SK-N-SH (cell line): ENCODE measurements at regions of chr10 and their contacts with region 1.

Region 1: DNA sequence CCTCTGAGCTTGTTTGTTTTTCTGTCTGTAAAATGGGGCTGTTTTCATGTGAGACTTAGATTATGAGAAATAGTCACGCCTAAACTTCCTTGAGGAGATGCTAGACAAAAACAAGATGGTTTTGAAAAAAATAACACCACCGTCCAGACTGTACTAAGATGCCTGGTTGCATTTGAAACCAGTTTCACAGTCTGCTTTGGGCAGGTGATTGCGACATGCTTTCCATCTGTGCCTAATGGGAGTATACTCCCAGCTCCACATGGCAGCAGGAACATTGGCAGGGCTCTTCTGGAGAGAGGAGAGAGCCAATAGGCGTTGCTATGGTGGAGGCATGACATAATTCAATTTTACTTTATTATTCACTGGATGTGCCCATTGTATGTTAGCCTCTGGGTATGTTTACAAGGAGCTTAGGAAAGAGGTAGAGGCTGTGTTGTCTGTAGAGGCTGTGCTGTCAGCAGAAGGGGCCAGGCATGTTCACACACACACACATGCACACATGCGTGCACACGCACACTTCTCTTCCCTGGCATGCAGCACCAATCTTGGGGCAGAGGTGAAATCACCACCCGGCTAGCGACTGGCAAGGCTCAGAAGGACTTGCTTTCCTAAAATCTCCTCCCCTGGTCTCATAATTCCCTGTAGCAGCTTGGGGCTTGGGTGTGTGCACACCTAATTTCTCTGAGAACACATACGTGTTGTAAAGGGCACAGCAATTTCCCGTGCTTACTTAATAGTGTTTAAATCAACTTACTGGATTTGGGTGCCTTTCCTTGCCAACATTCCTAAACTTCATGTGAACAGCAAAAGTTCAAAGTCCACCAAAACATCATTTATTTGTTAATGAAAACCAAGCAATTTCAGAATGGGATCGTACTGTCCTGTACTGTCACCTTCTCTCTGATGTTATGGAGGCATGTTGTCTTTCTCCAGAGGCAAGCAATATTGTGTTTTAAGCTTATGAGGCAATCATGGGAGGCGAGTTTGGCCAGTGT is 162.1 kb downstream of the TCF7L2 start:
- DNase-seq: no peak
- H3K4me3 ChIP-seq: no peak overlapping the region
- H3K27ac ChIP-seq: no peak overlapping the region
- H3K4me1 ChIP-seq: peaks cover 0 to 7% of the 10 kb centered on the region in 2 experiments; a peak in 1 of 4 replicates
- H3K27me3 ChIP-seq: no peaks in the 10 kb centered on the region
- CTCF ChIP-seq: no peak
- EP300 ChIP-seq: no peak
- RAD21 ChIP-seq: no peak

Region 2: GRCh38 chr10:112811740-112812551 is 300.2 kb before region 1 on chr10:
- CTCF ChIA-PET with region 1: no interaction called
- POLR2A ChIA-PET with region 1: no interaction called
- DNase-seq: no peak
- H3K4me3 ChIP-seq: peak overlapping the region in 1 of 2 experiments; percentile 45; a peak in 1 of 4 replicates
- H3K27ac ChIP-seq: peak overlapping the region; percentile 66 to 70; a peak in 3 of 4 replicates
- H3K4me1 ChIP-seq: peaks cover 2 to 18% of the 10 kb centered on the region in 2 experiments; a peak in 3 of 4 replicates
- H3K27me3 ChIP-seq: no peaks in the 10 kb centered on the region
- CTCF ChIP-seq: no peak
- EP300 ChIP-seq: peak in 1 of 2 experiments; percentile 70; a peak in 1 of 4 replicates
- RAD21 ChIP-seq: no peak

Region 3: GRCh38 chr10:112898540-112899395 is 213.4 kb before region 1 on chr10:
- CTCF ChIA-PET with region 1: no interaction called
- POLR2A ChIA-PET with region 1: no interaction called
- DNase-seq: no peak
- H3K4me3 ChIP-seq: no peak overlapping the region
- H3K27ac ChIP-seq: no peak overlapping the region
- H3K4me1 ChIP-seq: no peaks in the 10 kb centered on the region
- H3K27me3 ChIP-seq: no peaks in the 10 kb centered on the region
- CTCF ChIP-seq: no peak
- EP300 ChIP-seq: no peak
- RAD21 ChIP-seq: no peak

Region 4: DNA sequence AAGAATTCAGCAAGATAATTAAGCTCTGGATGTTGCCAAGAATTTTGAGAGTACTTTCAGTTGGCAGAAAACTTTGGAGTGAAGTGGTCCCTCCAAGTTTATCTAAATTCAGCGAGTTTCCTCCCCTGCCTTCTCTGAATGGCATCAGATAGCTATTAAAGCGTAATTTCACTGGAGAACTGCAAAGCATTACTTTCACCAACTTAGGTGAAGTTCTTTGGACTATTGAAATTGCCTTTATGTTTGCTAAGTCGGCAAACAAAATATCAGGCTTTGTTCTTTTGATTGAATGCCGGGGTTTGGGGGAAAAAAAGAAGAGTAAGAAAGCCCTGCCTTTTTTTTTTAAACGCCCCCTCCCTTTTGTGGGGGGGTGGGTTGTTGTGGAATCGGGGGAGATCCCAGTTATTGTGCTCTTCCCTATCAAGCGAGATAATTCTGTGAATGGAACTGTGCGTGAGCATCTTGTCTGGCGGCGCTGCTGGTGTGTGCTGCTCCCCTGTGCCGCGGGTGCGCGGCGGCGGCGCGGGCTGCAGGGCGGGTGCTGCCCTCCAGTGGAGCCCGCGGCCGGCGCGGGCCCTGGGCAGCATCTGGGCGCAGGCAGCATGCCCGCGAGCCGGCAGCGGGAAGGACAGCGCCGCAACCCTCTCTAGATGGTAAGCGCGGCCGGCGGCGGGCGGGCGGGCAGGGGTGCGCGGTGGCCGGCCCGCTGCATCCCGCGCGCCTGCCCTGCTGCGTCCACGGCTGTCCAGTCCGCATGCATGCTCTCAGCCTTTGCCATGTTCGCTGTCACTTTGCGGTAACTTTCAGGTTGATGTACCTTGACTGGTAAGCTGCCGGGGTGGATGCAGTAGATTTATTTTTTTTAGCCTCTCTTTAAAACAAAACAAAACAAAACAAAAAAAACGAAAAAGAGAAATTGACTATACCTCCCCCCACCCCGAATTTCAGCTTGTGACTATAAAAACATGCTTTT is 14.4 kb after region 1 on chr10:
- CTCF ChIA-PET with region 1: interaction called, 12 read pairs
- POLR2A ChIA-PET with region 1: no interaction called
- DNase-seq: peak; percentile 94
- H3K4me3 ChIP-seq: peak overlapping the region; percentile 43 to 65
- H3K27ac ChIP-seq: peak overlapping the region in 1 of 2 experiments; percentile 52; a peak in 2 of 4 replicates
- H3K4me1 ChIP-seq: peaks cover 0 to 6% of the 10 kb centered on the region in 2 experiments; a peak in 3 of 4 replicates
- H3K27me3 ChIP-seq: no peaks in the 10 kb centered on the region
- CTCF ChIP-seq: peak; percentile 68
- EP300 ChIP-seq: no peak
- RAD21 ChIP-seq: peak; percentile 85

Region 5: DNA sequence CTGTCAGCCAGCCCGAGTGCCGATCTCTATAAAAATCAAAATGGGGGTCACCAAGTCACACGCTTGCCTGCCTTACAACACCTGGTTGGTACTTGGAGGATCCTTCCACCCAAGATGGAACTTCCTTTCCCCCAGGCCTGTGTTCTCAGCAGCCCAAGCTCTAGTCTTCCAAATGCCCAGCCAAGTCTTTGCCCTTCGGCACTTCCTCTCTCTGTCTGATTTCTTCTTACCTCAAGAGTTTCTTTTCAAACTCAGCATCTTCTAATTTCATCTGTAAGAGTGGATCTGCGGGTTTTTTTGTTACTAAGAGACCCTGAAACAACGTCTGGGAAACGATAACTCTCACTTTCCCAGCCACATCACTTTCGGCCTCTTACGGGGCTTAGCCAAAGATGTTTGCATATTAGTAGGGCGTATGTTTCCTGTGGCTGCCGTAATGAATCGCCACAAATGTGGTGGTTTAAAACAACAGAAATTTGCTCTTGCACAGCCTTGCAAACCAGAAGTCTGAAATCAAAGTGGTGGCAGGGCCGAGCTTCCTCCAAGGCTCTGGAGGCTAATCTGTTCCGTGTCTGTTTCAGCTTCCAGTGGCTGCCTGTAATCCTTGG is 57.8 kb after region 1 on chr10:
- CTCF ChIA-PET with region 1: no interaction called
- POLR2A ChIA-PET with region 1: no interaction called
- DNase-seq: no peak
- H3K4me3 ChIP-seq: no peak overlapping the region
- H3K27ac ChIP-seq: no peak overlapping the region
- H3K4me1 ChIP-seq: peaks cover 0 to 23% of the 10 kb centered on the region in 2 experiments; a peak in 2 of 4 replicates
- H3K27me3 ChIP-seq: no peaks in the 10 kb centered on the region
- CTCF ChIP-seq: no peak
- EP300 ChIP-seq: no peak
- RAD21 ChIP-seq: no peak